A673 (cell line): ENCODE measurements at regions of chr13 and their contacts with region 1.

Region 1: DNA sequence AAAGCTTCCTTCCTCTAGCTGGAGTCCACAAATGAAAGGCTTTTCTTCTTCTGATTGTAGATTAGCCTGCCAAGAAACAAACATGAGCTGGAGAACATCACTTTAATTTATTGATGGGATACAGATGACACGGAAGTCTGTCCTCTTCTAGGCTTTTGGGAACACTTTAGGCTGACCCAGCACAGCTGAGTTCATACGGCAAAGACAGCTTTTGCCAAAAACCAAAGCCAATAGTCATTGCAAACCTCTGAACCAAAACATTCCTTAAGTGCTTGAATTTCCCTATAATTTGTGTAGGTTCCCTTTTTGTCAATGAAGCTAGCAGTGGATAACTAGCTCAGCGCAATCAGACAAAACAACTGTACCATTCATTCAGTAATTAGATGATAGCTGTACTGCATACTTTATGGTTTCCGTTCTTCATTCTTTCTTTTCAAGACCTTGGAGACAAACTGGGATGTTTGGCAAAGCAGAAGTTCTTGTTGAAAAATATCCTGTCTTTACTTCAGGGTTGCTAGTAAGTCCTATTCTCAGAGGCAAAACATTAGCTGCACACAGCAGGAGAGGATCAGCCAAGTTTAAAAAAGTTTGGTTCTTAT is 95.7 kb upstream of the SPRY2 start:
- DNase-seq: peak; percentile 98
- H3K4me3 ChIP-seq: no peak overlapping the region
- H3K27ac ChIP-seq: peak overlapping the region; percentile 21
- H3K4me1 ChIP-seq: peaks cover 29% of the 10 kb centered on the region
- H3K27me3 ChIP-seq: peaks cover 20% of the 10 kb centered on the region
- CTCF ChIP-seq: no peak

Region 2: GRCh38 chr13:80510686-80511085 is 74.0 kb after region 1 on chr13:
- CTCF ChIA-PET with region 1: no interaction called
- POLR2A ChIA-PET with region 1: no interaction called
- intact Hi-C with region 1: loop called (anchors 2 kb)
- DNase-seq: no peak
- H3K4me3 ChIP-seq: no peak overlapping the region
- H3K27ac ChIP-seq: no peak overlapping the region
- H3K4me1 ChIP-seq: peaks cover 9% of the 10 kb centered on the region
- H3K27me3 ChIP-seq: no peaks in the 10 kb centered on the region
- CTCF ChIP-seq: no peak